HEK293T (cell line): ENCODE measurements at regions of chr16 and their contacts with region 1.

Region 1: DNA sequence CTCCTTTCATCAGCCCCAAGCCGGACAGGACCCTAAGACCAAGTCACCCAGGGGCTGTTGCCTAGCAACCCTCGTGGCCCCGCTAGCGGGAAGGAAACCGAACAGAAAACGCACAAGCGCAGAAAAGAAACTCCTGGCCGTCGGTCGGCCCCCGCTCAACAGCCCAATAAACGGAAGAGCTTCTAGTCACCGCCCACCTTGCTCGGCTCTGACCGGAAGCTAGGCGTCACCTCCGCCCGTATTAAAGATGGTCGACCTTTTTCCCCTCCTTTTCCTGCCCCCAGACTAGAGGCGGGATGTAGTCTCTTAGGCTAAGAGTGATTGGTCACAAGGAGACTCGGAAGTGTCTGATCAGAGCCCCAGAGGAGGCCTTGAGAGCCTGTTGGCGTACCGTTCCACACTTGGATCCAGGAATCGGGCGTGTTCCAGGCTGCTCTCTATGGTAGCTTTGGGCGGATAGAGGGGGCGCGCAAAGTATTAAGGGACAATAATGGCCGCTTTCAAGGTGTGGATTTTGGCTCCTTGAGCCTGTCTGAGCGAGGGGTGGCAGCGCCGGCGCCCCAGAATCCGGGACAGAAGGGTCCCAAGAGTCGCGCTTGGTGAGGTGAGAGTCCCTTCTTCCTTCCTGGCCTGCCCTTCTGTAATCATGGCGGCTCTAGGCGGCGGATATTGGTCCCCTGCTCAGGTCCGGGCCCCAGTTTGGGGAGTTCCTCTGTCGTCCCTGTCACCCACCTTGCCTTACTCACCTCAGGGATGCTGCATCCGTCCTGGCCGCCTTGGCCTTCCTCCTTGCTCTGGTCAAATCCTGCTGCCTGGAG is at the starts of genes DHX38 and TXNL4B:
- DNase-seq: peak; percentile 95

Region 2: GRCh38 chr16:72104905-72105304 is 11.2 kb after region 1 on chr16:
- CTCF ChIA-PET with region 1: no interaction called
- POLR2A ChIA-PET with region 1: interaction called, 12 read pairs
- DNase-seq: no peak